ENCODE measurements at regions of chr19 and their contacts with region 1.

Region 1: GRCh38 chr19:44025217-44025936 is at the start of gene ZNF222:
- DNase-seq: peak; percentile 41 to 78 (median 66)
- ATAC-seq: peak; percentile 99
- H3K4me3 ChIP-seq: peak within 1 kb of the TSS; percentile 76
- H3K4me3 Mint-ChIP-seq: peak within 1 kb of the TSS; percentile 95 to 100 (median 98)
- H3K27ac ChIP-seq: peak within 1 kb of the TSS; percentile 71
- H3K27ac Mint-ChIP-seq: peak within 1 kb of the TSS; percentile 84 to 98 (median 94)
- H3K4me1 ChIP-seq: peaks cover 5 to 9% of the 10 kb centered on the region in 2 donors
- H3K4me1 Mint-ChIP-seq: peaks cover 12 to 40% (median 31%) of the 10 kb centered on the region in 7 donors
- H3K27me3 ChIP-seq: no peaks in the 10 kb centered on the region
- H3K27me3 Mint-ChIP-seq: peaks cover 0 to 9% (median 3%) of the 10 kb centered on the region in 5 donors
- total RNA-seq, gene ZNF222: 2.9 to 10.1 (median 4.5) TPM

Region 2: DNA sequence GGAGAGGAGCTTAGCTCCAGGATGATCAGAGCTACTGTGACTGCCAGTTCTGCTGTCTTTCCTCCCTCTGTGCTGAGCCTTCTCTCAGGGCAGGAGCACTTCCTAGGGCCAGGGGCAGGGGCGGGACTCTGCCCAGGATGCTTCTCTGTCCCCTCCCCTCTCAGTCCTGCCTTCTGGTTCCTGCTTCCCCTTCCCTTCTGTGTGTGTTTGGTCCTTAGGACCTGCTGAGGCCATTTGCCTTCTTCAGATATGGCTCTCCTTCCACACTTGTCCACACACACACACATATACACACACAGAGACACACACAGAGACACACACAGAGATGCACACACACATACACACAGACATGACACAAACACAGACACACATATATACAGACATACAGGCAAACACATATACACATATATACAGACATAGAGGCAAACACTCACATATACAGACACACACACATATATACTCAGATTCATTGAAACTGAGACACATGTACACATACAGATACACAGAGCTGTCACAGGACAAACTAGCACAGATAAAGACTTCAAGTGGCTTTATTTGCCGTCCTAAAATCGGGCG is 693.9 kb before region 1 on chr19:
- CTCF ChIA-PET with region 1: no interaction called
- POLR2A ChIA-PET with region 1: no interaction called
- intact Hi-C with region 1: no loop called
- DNase-seq: no peak
- ATAC-seq: no peak
- H3K4me3 ChIP-seq: no peak overlapping the region
- H3K4me3 Mint-ChIP-seq: no peak overlapping the region
- H3K27ac ChIP-seq: no peak overlapping the region
- H3K27ac Mint-ChIP-seq: no peak overlapping the region
- H3K4me1 ChIP-seq: no peaks in the 10 kb centered on the region
- H3K4me1 Mint-ChIP-seq: no peaks in the 10 kb centered on the region
- H3K27me3 ChIP-seq: no peaks in the 10 kb centered on the region
- H3K27me3 Mint-ChIP-seq: peaks cover 0 to 5% (median 3%) of the 10 kb centered on the region in 5 donors

Region 3: DNA sequence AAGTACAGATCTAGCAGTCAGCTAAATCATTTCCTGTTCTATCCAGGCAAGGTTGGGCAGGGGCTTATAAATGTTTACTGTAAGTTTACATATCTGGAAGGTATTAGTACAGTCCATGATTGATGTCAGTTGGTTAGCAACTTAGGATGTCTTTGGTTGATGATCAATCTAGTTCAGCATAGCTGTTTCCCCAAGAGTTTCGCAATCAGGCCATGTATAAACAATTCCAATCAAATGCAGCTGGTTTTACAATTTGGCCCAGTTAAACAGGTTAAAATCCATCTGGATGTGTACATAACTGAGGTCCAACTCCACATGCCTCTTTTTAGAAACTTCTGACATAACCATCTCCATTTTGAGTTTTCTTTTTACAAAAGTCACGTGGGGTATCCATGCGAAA is 67.5 kb before region 1 on chr19:
- CTCF ChIA-PET with region 1: no interaction called
- POLR2A ChIA-PET with region 1: no interaction called
- intact Hi-C with region 1: no loop called
- DNase-seq: no peak
- ATAC-seq: no peak
- H3K4me3 ChIP-seq: no peak overlapping the region
- H3K4me3 Mint-ChIP-seq: no peak overlapping the region
- H3K27ac ChIP-seq: no peak overlapping the region
- H3K27ac Mint-ChIP-seq: no peak overlapping the region
- H3K4me1 ChIP-seq: no peaks in the 10 kb centered on the region
- H3K4me1 Mint-ChIP-seq: no peaks in the 10 kb centered on the region
- H3K27me3 ChIP-seq: no peaks in the 10 kb centered on the region
- H3K27me3 Mint-ChIP-seq: peaks cover 0 to 18% (median 5%) of the 10 kb centered on the region in 5 donors

Region 4: DNA sequence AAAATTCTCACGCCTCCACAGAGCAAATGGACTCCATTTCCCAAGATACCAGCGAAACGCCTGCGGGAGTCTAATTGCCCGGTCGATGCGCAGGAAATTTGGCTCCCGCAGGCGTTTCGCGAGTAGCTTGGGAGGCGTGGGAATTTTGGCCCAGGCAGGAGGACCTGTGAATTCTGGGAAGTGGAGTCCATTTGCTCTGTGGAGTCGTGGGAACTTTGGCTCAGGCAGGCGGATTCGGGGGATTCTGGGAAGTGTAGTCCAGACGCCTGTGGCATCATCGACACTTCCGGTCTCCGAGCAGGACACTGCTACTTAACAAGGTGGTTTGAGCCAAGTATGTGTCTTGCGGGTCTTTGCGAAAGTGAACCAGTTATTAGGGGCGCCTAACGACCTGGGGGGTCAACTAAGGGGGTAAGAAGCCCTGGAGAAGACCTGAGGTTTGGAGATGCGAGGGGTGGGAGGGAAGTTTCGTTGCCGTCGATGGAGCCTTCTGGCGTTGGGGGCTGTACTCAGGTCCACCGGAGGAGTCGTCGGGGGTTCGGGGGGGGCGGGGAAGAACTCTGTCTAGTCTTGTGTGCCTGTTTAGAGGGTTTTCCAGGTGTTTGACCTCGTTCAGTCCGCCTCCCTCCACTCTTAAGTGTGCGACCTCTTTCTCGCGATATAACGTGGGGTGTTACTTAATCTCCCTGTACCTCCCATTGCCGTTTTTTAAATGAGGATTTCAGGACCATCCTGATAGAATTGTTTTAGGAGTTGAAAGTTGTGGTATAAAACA is 41.3 kb before region 1 on chr19 and contains the start of gene ZNF155:
- CTCF ChIA-PET with region 1: no interaction called
- POLR2A ChIA-PET with region 1: no interaction called
- intact Hi-C with region 1: loop called in 1 of 2 experiments (anchors 1 kb)
- DNase-seq: peak; percentile 46 to 72 (median 64)
- ATAC-seq: peak; percentile 92
- H3K4me3 ChIP-seq: peak within 1 kb of the TSS; percentile 96
- H3K4me3 Mint-ChIP-seq: peak within 1 kb of the TSS; percentile 89 to 99 (median 96)
- H3K27ac ChIP-seq: peak within 1 kb of the TSS; percentile 79
- H3K27ac Mint-ChIP-seq: peak within 1 kb of the TSS; percentile 72 to 97 (median 93)
- H3K4me1 ChIP-seq: peaks cover 0 to 3% of the 10 kb centered on the region in 2 donors
- H3K4me1 Mint-ChIP-seq: peaks cover 0 to 28% (median 14%) of the 10 kb centered on the region in 7 donors
- H3K27me3 ChIP-seq: no peaks in the 10 kb centered on the region
- H3K27me3 Mint-ChIP-seq: no peaks in the 10 kb centered on the region
- total RNA-seq, gene ZNF155: 5.2 to 13.3 (median 9.1) TPM

Region 5: GRCh38 chr19:44141191-44142058 is 116.0 kb after region 1 on chr19 and contains the start of gene ZNF234:
- CTCF ChIA-PET with region 1: no interaction called
- POLR2A ChIA-PET with region 1: no interaction called
- intact Hi-C with region 1: loop called in 1 of 2 experiments (anchors 1 kb)
- DNase-seq: peak; percentile 29 to 69 (median 56)
- ATAC-seq: peak; percentile 92
- H3K4me3 ChIP-seq: peak within 1 kb of the TSS; percentile 80
- H3K4me3 Mint-ChIP-seq: peak within 1 kb of the TSS; percentile 90 to 97 (median 96)
- H3K27ac ChIP-seq: peak within 1 kb of the TSS; percentile 77
- H3K27ac Mint-ChIP-seq: peak within 1 kb of the TSS; percentile 64 to 94 (median 88)
- H3K4me1 ChIP-seq: peaks cover 0 to 12% of the 10 kb centered on the region in 2 donors
- H3K4me1 Mint-ChIP-seq: peaks cover 14 to 30% (median 25%) of the 10 kb centered on the region in 7 donors
- H3K27me3 ChIP-seq: no peaks in the 10 kb centered on the region
- H3K27me3 Mint-ChIP-seq: no peaks in the 10 kb centered on the region
- total RNA-seq, gene ZNF234: 2.8 to 25.2 (median 13.4) TPM

Region 6: GRCh38 chr19:44207126-44207803 is 181.9 kb after region 1 on chr19:
- CTCF ChIA-PET with region 1: no interaction called
- POLR2A ChIA-PET with region 1: interaction called, 3 read pairs
- intact Hi-C with region 1: loop called in 1 of 2 experiments (anchors 1 kb)
- DNase-seq: peak; percentile 25 to 78 (median 70)
- ATAC-seq: peak; percentile 97
- H3K4me3 ChIP-seq: peak overlapping the region; percentile 79
- H3K4me3 Mint-ChIP-seq: peak overlapping the region; percentile 81 to 95 (median 87)
- H3K27ac ChIP-seq: peak overlapping the region; percentile 75
- H3K27ac Mint-ChIP-seq: peak overlapping the region; percentile 79 to 93 (median 84)
- H3K4me1 ChIP-seq: peaks cover 0 to 11% of the 10 kb centered on the region in 2 donors
- H3K4me1 Mint-ChIP-seq: peaks cover 7 to 15% (median 11%) of the 10 kb centered on the region in 7 donors
- H3K27me3 ChIP-seq: no peaks in the 10 kb centered on the region
- H3K27me3 Mint-ChIP-seq: peaks cover 0 to 22% (median 16%) of the 10 kb centered on the region in 5 donors

Measured in naive thymus-derived CD4-positive, alpha-beta T cell (primary cell).